ENCODE measurements at regions of chr11 and their contacts with region 1.

Region 1: GRCh38 chr11:119533921-119534736 is 111.2 kb upstream of the THY1 start:
- DNase-seq: no peak
- H3K4me3 ChIP-seq: no peak overlapping the region
- CTCF ChIP-seq: peak; percentile 89

Region 2: DNA sequence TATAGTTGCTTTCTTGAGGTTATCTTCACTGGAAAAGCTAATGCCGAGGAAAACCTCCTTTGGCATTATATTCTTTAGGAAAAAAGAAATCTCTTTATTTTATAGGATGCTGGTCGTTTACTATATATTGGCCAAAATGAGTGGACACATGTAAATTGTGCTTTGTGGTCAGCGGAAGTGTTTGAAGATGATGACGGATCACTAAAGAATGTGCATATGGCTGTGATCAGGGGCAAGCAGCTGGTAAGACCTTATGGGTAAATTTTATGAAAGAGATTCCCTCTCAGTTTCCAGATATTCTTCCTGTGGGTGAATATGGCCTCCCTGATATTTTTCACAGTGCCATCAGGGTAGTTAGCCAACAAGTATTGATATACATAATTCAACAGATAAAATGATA is 1036.3 kb before region 1 on chr11:
- CTCF ChIA-PET with region 1: no interaction called
- POLR2A ChIA-PET with region 1: no interaction called
- DNase-seq: peak; percentile 4
- H3K4me3 ChIP-seq: no peak overlapping the region
- CTCF ChIP-seq: no peak

Region 3: GRCh38 chr11:119481021-119481666 is 53.0 kb before region 1 on chr11:
- CTCF ChIA-PET with region 1: interaction called, 58 read pairs
- POLR2A ChIA-PET with region 1: no interaction called
- DNase-seq: peak; percentile 90
- H3K4me3 ChIP-seq: no peak overlapping the region
- CTCF ChIP-seq: peak; percentile 95

Region 4: DNA sequence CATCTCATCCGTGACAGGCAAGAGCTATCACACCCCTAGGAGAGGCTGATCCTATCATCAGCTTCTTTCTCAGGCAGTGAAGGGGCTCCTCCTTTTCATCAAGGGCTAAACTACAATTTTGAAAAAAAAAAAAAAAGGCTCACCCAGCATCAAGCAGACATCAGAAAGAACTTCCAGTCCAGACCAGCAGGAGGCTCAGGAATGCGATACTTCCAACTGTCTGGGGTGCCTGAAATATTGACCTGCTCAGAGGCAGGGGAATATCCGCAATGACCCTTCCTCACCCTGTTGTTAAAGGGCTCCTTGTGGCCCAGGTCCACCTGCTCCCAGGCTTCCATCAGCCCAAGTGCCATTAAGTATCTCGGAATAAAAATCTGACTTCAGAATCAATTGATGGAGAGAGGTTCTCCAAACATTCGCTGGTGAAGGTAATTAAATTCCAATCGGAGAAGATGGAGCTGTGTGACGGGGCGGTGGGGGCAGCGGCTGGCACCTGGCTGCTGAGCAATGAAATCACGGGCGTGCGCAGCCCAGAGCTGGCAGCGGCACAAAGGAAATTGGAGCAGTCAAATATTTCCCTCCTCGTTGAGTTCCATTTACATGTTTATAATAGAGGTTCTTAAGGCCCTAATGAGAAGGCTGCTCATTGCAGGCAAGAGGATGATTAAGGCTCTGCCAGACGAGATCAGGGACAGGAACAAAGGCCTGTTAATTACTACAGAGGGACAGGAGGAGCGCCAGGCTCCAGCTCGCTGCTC is 42.2 kb before region 1 on chr11:
- CTCF ChIA-PET with region 1: interaction called, 58 read pairs
- POLR2A ChIA-PET with region 1: no interaction called
- DNase-seq: no peak
- H3K4me3 ChIP-seq: no peak overlapping the region
- CTCF ChIP-seq: peak; percentile 37

Region 5: GRCh38 chr11:119501777-119502405 is 32.2 kb before region 1 on chr11:
- CTCF ChIA-PET with region 1: interaction called, 11 read pairs
- POLR2A ChIA-PET with region 1: no interaction called
- DNase-seq: no peak
- H3K4me3 ChIP-seq: no peak overlapping the region
- CTCF ChIP-seq: no peak

Region 6: DNA sequence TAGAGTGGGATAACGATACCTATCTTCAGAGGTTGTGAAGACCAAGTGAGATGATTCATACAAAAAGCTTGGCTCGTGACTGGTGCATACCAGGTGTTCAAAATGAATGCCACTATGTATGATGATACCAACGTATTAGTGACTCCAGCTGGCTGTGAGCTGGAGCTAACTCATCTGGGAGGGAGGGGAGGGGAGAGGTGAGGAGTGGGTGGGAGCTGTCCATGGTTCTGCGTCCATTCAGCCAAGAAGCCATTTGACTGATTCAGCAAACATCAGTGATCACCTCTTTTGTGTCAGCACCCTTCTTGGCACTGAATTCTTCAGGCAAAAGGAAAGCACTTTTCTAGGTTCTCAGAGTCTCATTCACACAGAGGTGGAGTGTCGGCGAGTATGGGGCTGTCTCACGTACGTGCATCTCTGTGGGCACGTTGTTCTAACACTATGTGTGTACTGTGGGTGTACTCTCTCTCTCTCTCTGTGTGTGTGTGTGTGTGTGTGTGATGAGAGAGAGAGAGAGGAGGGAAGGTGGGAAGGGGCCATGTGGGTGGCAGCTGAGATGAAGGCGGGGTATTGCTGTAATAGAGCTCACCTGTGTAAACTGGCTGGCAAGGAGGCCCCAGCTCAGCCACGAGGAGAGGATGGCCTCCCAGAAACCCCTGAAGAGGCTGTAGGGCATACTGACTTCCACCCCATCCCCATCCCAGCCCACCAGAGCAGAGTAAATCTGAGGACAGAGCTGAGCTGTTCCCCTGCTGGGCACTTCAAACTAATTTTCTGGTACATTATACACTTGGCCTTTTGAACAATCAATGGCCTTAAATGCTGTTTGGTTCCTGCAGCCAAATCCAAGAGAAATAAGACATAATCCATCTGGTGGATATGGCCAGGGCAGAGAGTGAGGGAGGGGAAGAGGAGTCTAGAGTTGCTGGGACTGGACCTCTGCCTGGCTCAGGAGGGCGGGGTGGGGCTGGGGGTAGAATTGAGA is 15.1 kb before region 1 on chr11:
- CTCF ChIA-PET with region 1: interaction called, 103 read pairs
- POLR2A ChIA-PET with region 1: no interaction called
- DNase-seq: no peak
- H3K4me3 ChIP-seq: no peak overlapping the region
- CTCF ChIP-seq: no peak

Region 7: GRCh38 chr11:119550053-119550752 is 16.1 kb after region 1 on chr11:
- CTCF ChIA-PET with region 1: interaction called, 18 read pairs
- POLR2A ChIA-PET with region 1: no interaction called
- DNase-seq: no peak
- H3K4me3 ChIP-seq: no peak overlapping the region
- CTCF ChIP-seq: no peak

Region 8: DNA sequence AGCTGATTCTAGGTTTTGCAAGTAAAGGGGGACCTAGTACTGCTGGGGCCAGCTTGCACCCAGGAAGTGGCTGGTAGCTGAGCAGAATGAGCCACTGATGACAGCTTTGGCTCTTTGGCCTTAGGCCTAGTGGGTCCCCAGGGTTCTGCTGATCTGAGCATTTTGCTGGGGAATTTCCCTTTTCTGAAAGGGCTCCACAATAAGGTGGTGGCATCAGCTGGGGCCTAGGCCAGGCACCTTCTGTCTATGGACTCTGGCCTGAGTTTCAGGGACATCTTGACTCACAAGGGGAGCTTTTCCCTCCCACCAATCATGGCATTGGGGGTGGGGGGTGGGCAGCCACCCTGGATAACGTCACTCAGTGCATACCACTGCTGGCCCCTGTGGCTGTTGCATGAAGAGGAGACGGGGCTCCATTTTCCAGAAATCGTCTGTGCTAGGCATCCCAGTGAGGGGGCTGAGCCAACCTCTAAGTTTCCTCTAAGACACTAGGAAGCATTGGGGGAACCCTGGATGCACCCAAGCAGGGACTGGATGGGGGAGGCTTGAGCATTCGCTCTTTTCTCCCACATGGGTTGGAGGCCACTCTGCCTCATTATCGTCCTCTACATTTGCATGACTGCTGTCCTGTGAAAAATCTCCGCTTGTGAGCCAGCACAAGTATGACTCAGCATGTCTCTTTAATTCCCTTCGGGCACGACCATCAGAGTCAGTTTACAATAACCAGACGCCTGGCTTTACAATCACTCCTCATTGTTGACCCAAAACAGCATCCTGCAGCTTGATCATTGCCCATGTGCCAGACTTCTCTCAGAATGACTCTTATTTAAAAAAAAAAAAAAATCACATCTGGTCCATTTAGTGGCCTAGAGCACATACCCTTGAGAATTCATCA is 33.8 kb after region 1 on chr11:
- CTCF ChIA-PET with region 1: interaction called, 15 read pairs
- POLR2A ChIA-PET with region 1: no interaction called
- DNase-seq: peak; percentile 26
- H3K4me3 ChIP-seq: no peak overlapping the region
- CTCF ChIP-seq: no peak

Measured in AG04449 (cell line).